ENCODE measurements at regions of chr1 and their contacts with region 1.

Region 1: DNA sequence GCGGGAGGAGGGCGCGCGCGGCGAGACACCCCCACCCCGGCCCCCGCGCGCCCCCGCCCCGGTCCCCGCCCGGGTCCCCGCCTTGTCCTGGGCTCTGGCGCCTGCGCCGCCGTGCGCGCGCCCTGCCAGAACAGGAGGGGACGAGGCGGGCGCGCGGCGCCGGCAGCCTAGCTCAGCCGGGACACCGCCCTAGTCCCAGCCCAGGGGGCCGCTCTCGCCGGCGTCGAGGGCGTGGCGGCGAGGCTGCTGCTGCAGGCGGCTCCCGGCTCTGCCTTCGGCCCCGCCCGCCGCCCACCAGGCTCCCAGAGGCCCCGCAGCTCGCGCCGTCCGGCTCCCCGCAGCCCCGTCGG is at the start of gene RCAN3:
- DNase-seq: peak; percentile 95
- ATAC-seq: peak; percentile 87
- H3K4me3 Mint-ChIP-seq: peak within 1 kb of the TSS; percentile 95
- H3K27ac Mint-ChIP-seq: peak within 1 kb of the TSS; percentile 96
- H3K4me1 Mint-ChIP-seq: peaks cover 73% of the 10 kb centered on the region
- H3K27me3 Mint-ChIP-seq: no peaks in the 10 kb centered on the region
- total RNA-seq, gene RCAN3: 23.9 to 30.6 TPM

Region 2: DNA sequence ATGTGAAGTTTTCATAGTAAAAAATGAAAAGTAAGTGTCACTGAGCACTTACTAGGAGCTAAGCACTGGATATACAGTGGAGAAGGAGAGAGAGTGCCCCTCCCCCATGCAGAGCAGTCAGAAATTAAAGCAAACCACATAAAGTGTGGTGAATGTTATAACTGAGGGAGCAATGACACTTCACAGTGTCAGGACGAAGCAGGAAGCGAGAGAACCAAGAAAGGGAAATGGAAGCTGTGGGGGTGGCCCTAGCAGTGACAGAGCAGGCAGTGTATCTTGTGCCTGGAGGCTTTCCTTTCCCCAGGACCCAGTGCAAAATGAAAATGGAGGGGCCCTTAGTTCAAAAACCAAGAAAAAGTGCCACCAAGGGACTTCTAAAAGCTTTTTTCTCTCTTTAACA is 21.6 kb before region 1 on chr1:
- CTCF ChIA-PET with region 1: interaction called, 49 read pairs
- DNase-seq: peak; percentile 70
- ATAC-seq: peak; percentile 67
- H3K4me3 Mint-ChIP-seq: peak overlapping the region; percentile 66
- H3K27ac Mint-ChIP-seq: peak overlapping the region; percentile 96
- H3K4me1 Mint-ChIP-seq: peaks cover 43% of the 10 kb centered on the region
- H3K27me3 Mint-ChIP-seq: no peaks in the 10 kb centered on the region

Region 3: GRCh38 chr1:24536391-24536840 is 33.7 kb after region 1 on chr1:
- CTCF ChIA-PET with region 1: interaction called, 13 read pairs
- DNase-seq: peak; percentile 83
- ATAC-seq: peak; percentile 61
- H3K4me3 Mint-ChIP-seq: peak overlapping the region; percentile 85
- H3K27ac Mint-ChIP-seq: peak overlapping the region; percentile 97
- H3K4me1 Mint-ChIP-seq: peaks cover 69% of the 10 kb centered on the region
- H3K27me3 Mint-ChIP-seq: no peaks in the 10 kb centered on the region

Region 4: GRCh38 chr1:24704411-24705259 is 202.0 kb after region 1 on chr1:
- CTCF ChIA-PET with region 1: no interaction called
- DNase-seq: no peak
- ATAC-seq: no peak
- H3K4me3 Mint-ChIP-seq: no peak overlapping the region
- H3K27ac Mint-ChIP-seq: no peak overlapping the region
- H3K4me1 Mint-ChIP-seq: peaks cover 14% of the 10 kb centered on the region
- H3K27me3 Mint-ChIP-seq: peaks cover 2% of the 10 kb centered on the region

Measured in activated CD8-positive, alpha-beta memory T cell treated with anti-CD3 and anti-CD28 coated beads, Interleukin-2, amount 10 ng/mL, durations not matched to agents 7 days and 5 days (primary cell).